ENCODE measurements at regions of chr14 and their contacts with region 1.

Region 1: DNA sequence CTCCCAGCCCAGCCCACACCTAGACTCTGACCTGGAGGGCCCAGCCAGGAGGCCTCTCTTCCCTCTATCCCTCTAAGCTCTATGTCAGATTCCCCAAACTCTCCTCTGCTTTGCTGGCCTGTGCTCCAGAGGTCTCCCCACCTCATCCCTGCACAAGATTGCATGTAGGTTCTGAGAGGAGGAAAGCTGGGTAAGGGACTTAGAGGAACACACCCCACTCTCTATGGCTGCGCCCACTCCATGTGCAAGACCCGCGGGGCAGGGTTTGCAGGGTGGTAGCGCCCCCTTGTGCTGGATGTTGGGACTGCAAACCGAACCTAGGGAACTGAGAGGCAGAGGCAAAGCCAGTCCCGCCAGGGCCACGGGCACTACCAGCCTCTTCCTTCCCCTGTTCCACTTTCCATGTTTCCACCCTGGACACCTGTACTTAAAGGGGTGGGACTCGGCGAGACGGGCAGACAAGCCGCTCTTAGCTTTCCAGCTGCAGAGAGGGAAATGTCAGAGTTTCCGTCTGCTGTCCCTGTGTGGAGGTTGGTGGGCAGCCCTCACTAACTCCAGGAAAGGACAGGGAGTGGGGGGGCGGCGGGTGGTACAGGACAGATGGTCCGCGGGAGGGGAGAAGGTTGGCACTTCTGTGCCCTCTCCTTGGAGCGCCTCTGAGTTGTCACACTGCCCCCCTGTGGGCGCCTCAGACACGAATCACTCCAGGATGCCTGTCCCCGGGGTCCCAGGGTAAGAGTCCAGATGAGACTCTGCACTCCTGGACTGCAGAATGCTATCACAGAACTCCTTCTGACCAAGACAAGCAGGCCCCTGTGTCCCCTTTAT is 16.8 kb downstream of the MMP14 start:
- DNase-seq: peak; percentile 90
- H3K4me3 ChIP-seq: peak overlapping the region; percentile 66
- H3K27ac ChIP-seq: peak overlapping the region; percentile 48
- H3K4me1 ChIP-seq: peaks cover 14% of the 10 kb centered on the region
- CTCF ChIP-seq: peak; percentile 93

Region 2: DNA sequence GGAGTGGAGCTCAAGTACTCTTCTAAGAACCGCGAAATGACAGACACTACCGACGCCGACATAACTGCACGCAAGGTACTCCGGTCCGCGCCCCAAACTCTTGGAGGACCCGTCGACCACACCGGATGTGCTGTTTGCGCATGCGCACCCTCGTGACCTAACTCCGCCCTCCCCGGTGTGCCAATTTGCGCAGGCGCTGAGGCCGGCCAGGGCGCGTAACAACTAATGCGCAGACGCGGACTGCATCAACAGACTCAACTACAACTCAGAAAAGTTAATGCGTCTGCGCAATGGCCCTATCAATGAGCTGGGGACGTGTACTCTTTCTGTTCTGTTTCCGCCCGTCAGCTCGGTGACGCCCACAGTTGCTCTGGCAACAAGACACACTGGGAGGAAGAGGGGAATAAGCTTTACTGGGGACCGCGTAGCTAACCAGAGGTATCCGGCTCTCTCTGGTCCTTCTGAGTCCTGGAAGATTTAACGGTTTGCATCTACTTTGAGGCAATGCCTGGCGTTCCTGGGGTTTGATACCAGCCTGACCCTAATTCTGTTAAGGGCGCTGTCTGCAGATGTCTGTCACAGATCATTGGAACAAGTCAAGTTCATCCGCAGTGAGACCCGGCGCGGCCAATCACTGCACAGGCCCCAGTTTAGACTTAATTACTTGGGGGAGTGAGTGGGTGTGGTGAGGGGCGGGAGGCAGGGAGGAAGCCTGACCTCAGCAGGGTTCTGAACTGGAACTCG is 263.9 kb before region 1 on chr14 and contains the start of gene DAD1:
- CTCF ChIA-PET with region 1: no interaction called
- POLR2A ChIA-PET with region 1: no interaction called
- intact Hi-C with region 1: loop called (anchors 5 kb)
- DNase-seq: peak; percentile 100
- H3K4me3 ChIP-seq: peak within 1 kb of the TSS; percentile 91
- H3K27ac ChIP-seq: peak within 1 kb of the TSS; percentile 77
- H3K4me1 ChIP-seq: peaks cover 52% of the 10 kb centered on the region
- CTCF ChIP-seq: no peak; the same call in 1 of the 2 replicates
- total RNA-seq, gene DAD1: 88.6 and 154 TPM in 2 replicates

Region 3: DNA sequence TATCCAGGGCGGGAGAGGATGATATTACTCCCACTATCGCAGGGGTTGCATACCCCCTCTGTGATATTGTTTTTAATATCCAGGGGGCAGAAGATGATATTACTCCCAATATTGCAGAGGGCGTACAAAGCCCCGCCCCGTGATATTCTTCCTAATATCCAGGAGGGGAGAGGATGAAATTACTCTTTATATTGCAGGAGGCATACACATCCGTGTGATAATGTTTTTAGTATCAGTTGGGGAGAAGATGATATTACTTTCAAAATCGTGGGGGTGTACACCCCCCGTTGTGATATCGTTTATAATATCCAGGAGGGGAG is 139.6 kb before region 1 on chr14:
- CTCF ChIA-PET with region 1: no interaction called
- POLR2A ChIA-PET with region 1: no interaction called
- intact Hi-C with region 1: loop called (anchors 1 kb)
- DNase-seq: no peak
- H3K4me3 ChIP-seq: peak overlapping the region; percentile 62
- H3K27ac ChIP-seq: no peak overlapping the region
- H3K4me1 ChIP-seq: peaks cover 13% of the 10 kb centered on the region
- CTCF ChIP-seq: no peak

Region 4: DNA sequence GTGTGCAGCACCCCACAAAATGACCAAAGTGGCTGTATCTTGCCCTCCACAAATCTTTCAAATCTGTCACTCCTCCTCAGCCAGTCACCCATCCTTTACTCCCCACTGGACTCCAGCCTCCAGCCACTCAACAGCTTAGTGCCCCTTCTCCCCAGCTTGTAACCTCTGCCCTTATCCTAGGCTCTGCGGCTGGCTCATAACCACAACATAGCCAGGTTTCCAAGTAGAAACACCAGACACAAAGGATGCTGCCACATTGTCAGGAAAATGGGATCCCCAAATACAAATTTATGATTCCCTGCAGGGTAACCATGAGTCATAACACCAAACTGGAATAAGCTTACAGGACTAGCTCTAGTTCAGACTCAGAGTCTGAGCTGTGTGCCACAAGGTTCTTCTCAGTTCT is 71.6 kb before region 1 on chr14:
- CTCF ChIA-PET with region 1: interaction called, 3 read pairs
- POLR2A ChIA-PET with region 1: interaction called, 3 read pairs
- intact Hi-C with region 1: loop called (anchors 1 kb)
- DNase-seq: no peak
- H3K4me3 ChIP-seq: no peak overlapping the region
- H3K27ac ChIP-seq: peak overlapping the region; percentile 33
- H3K4me1 ChIP-seq: peaks cover 53% of the 10 kb centered on the region
- CTCF ChIP-seq: no peak

Region 5: GRCh38 chr14:22829661-22830442 is 23.3 kb before region 1 on chr14 and contains the start of gene MRPL52:
- CTCF ChIA-PET with region 1: interaction called, 8 read pairs
- POLR2A ChIA-PET with region 1: interaction called, 42 read pairs
- intact Hi-C with region 1: no loop called
- DNase-seq: peak; percentile 96
- H3K4me3 ChIP-seq: peak within 1 kb of the TSS; percentile 74
- H3K27ac ChIP-seq: peak within 1 kb of the TSS; percentile 69
- H3K4me1 ChIP-seq: peaks cover 50% of the 10 kb centered on the region
- CTCF ChIP-seq: no peak
- total RNA-seq, gene MRPL52: 100 and 126 TPM in 2 replicates